Common myeloid progenitor, CD34-positive (primary cell): ENCODE measurements at regions of chr1 and their contacts with region 1.

Region 1: GRCh38 chr1:173190101-173190906 is 16.8 kb downstream of the TNFSF4 start:
- DNase-seq: peak in 2 of 3 donors; percentile 81 to 83
- H3K4me3 ChIP-seq: peak overlapping the region in 3 of 7 experiments; percentile 5 to 25 (median 23)
- H3K27ac ChIP-seq: peak overlapping the region; percentile 25 to 59
- H3K4me1 ChIP-seq: peaks cover 13 to 40% (median 32%) of the 10 kb centered on the region in 4 experiments
- H3K27me3 ChIP-seq: no peaks in the 10 kb centered on the region

Region 2: GRCh38 chr1:172515927-172516326 is 674.4 kb before region 1 on chr1:
- CTCF ChIA-PET with region 1: no interaction called
- POLR2A ChIA-PET with region 1: no interaction called
- DNase-seq: peak in 2 of 3 donors; percentile 13 to 24
- H3K4me3 ChIP-seq: no peak overlapping the region
- H3K27ac ChIP-seq: no peak overlapping the region
- H3K4me1 ChIP-seq: peaks cover 4 to 23% (median 13%) of the 10 kb centered on the region in 4 experiments
- H3K27me3 ChIP-seq: no peaks in the 10 kb centered on the region

Region 3: DNA sequence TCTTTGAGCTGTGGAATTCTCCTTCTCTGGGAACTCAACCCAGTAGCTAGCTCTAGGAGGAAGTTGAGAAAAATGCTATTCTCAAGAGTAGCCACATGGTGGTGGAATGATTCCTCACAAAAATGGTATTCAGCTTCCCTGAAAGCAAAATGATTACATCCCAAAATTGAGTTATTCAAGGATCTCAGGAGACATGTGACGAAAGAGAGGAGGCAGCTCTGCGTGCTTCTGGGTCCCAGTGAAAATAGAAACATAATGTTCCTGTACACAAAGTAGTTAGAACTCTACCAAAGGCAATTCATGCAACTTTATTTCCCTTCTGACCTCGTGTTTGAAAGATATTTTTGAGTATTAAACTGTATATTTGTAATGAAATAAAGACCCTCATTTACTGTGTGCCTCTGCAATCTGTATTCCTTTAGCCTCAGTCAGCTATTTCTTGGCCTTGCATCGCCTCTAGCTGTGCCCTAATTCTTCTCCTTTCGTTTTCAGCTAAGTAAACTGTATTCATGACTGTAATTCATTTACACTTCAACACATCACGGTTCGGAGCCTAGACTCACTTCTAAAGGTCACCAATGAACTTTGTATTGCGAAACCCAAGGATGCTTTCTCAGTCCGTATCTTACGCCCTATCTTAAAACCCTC is 364.1 kb before region 1 on chr1:
- CTCF ChIA-PET with region 1: interaction called, 13 read pairs
- POLR2A ChIA-PET with region 1: no interaction called
- DNase-seq: peak; percentile 55 to 62 (median 57)
- H3K4me3 ChIP-seq: peak overlapping the region in 4 of 7 experiments; percentile 9 to 69 (median 44)
- H3K27ac ChIP-seq: no peak overlapping the region
- H3K4me1 ChIP-seq: peaks cover 6 to 54% (median 35%) of the 10 kb centered on the region in 4 experiments
- H3K27me3 ChIP-seq: no peaks in the 10 kb centered on the region

Region 4: DNA sequence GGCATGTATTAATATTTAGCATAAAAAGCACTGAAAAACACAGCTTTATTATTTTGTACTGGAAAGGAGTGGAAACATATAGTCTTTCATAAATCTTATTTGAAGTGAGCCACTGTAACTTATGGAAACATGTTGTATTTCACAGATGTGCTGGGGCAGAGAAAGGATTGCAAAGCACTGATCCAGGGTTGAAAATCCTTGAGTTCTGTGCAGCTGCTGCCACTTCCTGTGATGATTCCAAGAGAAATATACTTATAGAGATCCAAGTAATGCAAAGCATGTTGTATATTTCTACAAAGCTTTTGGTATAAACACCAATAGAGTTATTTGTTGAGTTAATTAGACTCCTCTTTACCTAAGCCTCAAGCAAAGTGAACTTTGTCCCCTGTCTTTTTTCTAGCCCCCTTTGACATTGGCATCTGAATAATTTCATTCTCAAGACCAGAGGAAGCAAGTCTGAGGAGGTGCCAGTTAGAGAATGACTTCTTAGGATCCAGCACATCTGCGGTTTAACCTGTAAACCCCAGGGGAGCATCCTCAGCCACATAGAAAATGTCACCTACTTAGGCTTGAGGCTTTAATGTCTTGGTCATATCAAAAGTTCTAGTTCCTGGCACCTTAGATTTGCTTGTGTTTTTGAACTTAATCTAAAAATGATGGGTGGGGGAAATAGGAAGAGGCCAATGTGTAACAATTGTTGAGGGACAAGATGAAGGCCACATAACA is 358.1 kb before region 1 on chr1:
- CTCF ChIA-PET with region 1: no interaction called
- POLR2A ChIA-PET with region 1: interaction called, 11 read pairs
- DNase-seq: no peak
- H3K4me3 ChIP-seq: no peak overlapping the region
- H3K27ac ChIP-seq: no peak overlapping the region
- H3K4me1 ChIP-seq: peaks cover 0 to 13% (median 9%) of the 10 kb centered on the region in 4 experiments
- H3K27me3 ChIP-seq: no peaks in the 10 kb centered on the region

Region 5: DNA sequence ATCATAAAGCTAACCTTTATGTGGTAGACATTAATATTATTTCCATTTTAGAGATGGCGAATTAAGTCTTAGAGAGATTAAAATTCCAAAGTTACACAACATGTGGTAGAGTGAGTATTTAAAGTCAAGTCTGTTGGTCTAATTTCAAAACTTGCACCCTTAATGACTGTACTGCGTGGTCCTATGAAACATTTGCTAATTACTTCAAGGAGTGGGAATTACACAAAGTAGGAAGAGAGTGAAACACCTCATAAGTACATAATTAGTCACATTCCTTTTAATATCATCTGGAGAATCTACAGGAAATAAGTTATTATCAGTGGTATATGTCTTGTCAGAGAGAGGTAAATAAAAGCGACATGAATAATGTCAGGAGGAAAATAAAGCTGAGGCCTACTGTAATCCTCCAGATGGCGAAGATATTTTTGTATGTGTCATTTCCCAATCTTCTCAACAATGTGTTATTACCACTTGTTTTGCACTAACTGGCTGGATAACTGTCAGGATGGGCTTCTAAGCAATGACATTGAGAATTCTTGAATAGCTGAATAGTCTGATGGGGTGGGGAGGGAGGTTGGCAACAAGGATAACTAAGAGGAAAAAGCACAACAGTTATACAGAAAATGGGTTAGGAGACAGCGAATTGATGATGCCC is 235.0 kb before region 1 on chr1:
- CTCF ChIA-PET with region 1: no interaction called
- POLR2A ChIA-PET with region 1: no interaction called
- DNase-seq: peak in 2 of 3 donors; percentile 14 to 23
- H3K4me3 ChIP-seq: no peak overlapping the region
- H3K27ac ChIP-seq: no peak overlapping the region
- H3K4me1 ChIP-seq: no peaks in the 10 kb centered on the region
- H3K27me3 ChIP-seq: no peaks in the 10 kb centered on the region

Region 6: DNA sequence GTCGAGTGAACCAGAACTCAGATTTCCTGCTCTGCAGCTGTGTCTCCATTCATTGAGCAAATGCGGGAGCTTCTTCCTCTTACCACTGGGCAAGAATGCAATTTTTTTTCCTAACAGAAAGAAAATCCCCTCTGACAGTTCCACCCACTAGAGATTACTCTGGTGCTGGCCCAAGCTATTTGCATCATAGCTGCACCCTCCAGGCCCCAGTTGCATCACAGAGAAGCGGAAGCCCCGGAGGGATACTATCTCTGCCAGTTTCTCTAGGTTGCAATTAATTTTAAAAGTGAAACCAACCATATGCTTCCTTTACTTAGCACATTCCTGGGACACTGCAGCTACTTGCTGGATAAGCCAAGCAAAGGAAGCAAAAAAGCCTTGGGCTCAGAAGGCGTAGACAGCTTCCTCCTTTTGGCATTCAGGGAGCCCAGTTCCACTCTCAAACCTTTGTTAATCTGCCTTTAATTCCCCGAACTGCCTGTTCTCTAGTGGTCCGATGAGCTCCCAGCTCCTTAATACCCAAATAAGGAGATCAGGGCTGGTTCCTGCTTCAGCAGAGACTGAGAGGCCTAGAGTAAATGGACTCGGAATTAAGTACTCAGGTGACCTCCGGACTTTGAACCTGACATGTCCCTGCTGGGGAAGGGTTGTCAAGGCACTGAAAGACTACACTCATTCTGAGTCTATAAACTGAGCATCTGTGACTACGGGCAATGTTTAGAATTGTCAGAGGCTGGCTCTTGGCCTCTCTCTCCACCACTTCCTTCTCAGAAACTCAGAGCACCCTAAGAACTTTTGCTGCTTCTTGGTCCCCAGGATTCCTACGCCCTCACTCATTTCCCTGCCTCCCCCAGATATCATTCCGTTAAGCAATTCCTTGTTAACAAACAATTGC is 67.1 kb before region 1 on chr1:
- CTCF ChIA-PET with region 1: no interaction called
- POLR2A ChIA-PET with region 1: no interaction called
- DNase-seq: peak; percentile 39 to 85 (median 75)
- H3K4me3 ChIP-seq: peak overlapping the region in 3 of 7 experiments; percentile 38 to 70 (median 41)
- H3K27ac ChIP-seq: peak overlapping the region; percentile 15 to 28
- H3K4me1 ChIP-seq: peaks cover 0 to 14% (median 8%) of the 10 kb centered on the region in 4 experiments
- H3K27me3 ChIP-seq: no peaks in the 10 kb centered on the region